Transverse colon (tissue), 4 donors: ENCODE measurements at regions of chr12 and their contacts with region 1.

Region 1: DNA sequence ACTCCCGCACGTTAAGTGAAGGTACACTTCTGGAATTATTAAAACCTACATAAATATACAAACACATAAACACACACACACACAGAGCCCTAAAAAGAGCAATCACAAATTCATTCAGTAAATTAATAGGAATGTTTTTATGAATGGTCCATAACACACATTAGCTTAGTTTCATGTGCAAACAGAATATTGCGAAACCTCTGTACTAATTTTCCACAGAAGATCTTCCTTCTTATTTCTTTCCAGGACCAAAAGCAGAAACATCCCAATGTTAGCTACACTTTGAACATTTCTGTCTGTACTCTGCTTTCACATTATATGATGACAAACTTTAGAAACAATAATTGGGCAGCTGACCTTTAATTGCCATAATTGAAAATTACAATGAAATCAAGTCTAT is 101.6 kb downstream of the SOX5 start:
- DNase-seq: no peak
- H3K4me3 ChIP-seq: no peak overlapping the region
- H3K27ac ChIP-seq: no peak overlapping the region
- H3K4me1 ChIP-seq: no peaks in the 10 kb centered on the region
- H3K27me3 ChIP-seq: no peaks in the 10 kb centered on the region
- CTCF ChIP-seq: no peak
- EP300 ChIP-seq: no peak
- POLR2A ChIP-seq: no peak

Region 2: GRCh38 chr12:24617471-24617870 is 769.6 kb after region 1 on chr12:
- in situ Hi-C with region 1: no loop called
- intact Hi-C with region 1: no loop called
- DNase-seq: no peak
- H3K4me3 ChIP-seq: no peak overlapping the region
- H3K27ac ChIP-seq: no peak overlapping the region
- H3K4me1 ChIP-seq: no peaks in the 10 kb centered on the region
- H3K27me3 ChIP-seq: no peaks in the 10 kb centered on the region
- CTCF ChIP-seq: no peak
- EP300 ChIP-seq: no peak
- POLR2A ChIP-seq: no peak

Region 3: GRCh38 chr12:24879644-24880043 is 1031.8 kb after region 1 on chr12:
- in situ Hi-C with region 1: no loop called
- intact Hi-C with region 1: loop called (anchors 5 kb)
- DNase-seq: no peak
- H3K4me3 ChIP-seq: no peak overlapping the region
- H3K27ac ChIP-seq: no peak overlapping the region
- H3K4me1 ChIP-seq: no peaks in the 10 kb centered on the region
- H3K27me3 ChIP-seq: no peaks in the 10 kb centered on the region
- CTCF ChIP-seq: no peak
- EP300 ChIP-seq: no peak
- POLR2A ChIP-seq: no peak